SK-MEL-5 (cell line): ENCODE measurements at regions of chr3 and their contacts with region 1.

Region 1: GRCh38 chr3:153595186-153595815 is 433.3 kb downstream of the RAP2B start:
- DNase-seq: peak; percentile 83

Region 2: DNA sequence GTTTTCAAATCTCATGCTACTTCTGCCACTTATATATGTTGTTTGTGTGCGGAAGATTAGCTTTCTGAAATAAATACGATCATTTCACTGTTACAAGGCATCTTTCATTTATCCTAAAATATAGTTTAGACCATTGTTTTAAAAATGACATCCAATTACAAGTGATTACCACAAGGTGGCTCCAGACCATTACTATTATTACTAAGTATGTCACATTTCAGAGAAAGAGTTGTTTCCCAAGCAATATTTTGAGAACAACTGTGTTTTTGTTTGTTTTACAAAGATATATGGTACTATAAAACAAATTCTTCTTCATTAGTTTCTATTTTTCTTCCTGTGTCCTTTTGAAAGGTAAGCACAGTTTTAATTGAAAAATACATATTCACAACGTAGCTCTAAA is 569.3 kb before region 1 on chr3:
- in situ Hi-C with region 1: loop called (anchors 10 kb)
- DNase-seq: peak; percentile 68